ENCODE measurements at regions of chr15 and their contacts with region 1.

Region 1: DNA sequence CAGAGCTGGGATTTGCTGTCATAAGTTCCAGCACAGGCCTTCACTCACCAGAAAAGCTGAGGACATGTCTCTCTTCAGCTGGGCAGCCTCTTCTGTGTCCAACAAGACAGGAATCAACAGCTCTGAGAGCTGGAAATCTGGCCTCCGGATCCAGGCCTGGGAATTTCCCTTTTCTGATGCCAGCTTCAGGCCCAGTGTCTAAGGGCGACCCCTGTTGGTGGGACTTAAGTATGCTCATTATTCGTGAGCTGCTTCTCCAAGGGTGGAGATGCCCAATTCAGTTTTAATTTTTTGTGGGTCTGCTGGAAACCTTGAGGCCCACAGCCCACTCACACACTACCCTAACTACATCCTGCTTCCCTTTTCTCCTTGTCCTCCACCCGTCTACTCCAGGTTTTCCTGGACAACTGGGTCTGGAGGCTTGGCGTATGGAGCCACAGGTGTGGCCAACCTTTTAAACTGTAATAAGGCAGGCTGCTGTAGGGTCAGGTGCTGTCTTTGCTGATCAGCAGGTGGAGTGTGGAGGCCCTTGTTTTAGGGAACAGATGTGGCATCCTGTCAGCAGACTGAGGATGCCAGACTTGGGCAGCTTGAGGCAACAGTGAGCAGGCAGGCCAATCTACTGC is 2.6 kb upstream of the CEMIP start:
- DNase-seq: peak; percentile 70
- ATAC-seq: peak; percentile 76
- H3K4me3 ChIP-seq: no peak overlapping the region
- H3K27ac ChIP-seq: peak overlapping the region; percentile 49
- H3K4me1 ChIP-seq: peaks cover 35% of the 10 kb centered on the region
- H3K27me3 ChIP-seq: peaks cover 30% of the 10 kb centered on the region
- CTCF ChIP-seq: peak; percentile 83

Region 2: DNA sequence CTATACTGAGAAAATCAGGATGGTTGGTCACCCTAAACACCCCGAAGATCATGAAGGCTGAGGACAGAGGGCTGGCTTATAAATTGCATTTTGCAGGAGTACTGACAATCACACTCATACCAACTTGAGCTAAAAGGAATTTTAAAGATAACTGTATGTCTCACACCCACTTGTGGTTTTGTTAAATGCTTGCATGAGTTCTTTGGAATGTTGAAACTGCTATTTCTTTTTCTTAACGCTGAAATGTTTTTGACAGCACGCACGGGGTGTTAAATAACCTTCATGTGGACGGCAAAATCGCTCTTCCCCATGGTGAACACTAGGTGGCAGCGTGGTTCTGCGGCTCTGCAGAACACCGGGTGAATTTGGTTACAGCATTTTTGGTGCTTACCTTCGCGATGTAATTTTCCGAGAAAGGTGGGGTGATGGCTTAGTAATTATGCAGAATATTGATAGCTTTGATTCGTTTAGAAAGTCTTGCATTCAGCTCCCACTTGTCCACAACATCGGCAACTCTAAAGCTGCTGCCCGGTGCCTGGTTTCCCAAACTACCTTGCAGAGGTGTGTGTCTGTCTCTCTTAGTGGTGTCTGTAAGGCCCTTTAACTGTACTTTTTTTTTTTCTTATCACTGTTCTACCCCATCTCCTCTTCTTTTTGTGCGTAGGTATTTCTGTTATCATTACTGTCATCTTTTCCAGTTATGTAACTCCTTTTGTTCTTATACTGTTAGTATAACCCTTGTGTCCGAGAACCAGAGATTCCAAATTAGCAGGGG is 320.7 kb before region 1 on chr15:
- intact Hi-C with region 1: loop called (anchors 5 kb)
- DNase-seq: no peak
- ATAC-seq: peak; percentile 91
- H3K4me3 ChIP-seq: no peak overlapping the region
- H3K27ac ChIP-seq: no peak overlapping the region
- H3K4me1 ChIP-seq: peaks cover 29% of the 10 kb centered on the region
- H3K27me3 ChIP-seq: no peaks in the 10 kb centered on the region
- CTCF ChIP-seq: peak; percentile 95

Region 3: DNA sequence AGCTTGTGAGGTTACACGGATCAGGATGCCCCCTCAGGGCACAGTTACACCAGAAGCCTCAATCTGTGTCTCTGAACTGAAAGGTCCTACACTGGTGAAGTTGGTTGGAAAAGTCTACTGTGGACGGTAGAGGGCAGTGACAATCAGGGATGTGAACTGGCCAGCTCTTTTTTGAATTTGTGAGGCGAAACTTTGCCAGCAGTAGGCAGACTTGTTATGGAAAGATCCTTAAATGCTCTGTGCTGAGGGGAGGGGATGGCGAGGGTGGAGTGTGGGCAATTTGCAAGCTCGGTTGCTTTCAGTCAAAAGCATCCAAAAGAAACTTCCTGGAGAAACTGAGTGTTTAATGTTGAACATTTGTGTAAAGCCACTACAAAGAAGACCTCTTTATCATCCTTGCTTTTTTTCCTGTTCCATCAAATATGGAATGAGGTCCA is 208.8 kb before region 1 on chr15:
- intact Hi-C with region 1: loop called (anchors 5 kb)
- DNase-seq: peak; percentile 35
- ATAC-seq: peak; percentile 81
- H3K4me3 ChIP-seq: no peak overlapping the region
- H3K27ac ChIP-seq: no peak overlapping the region
- H3K4me1 ChIP-seq: no peaks in the 10 kb centered on the region
- H3K27me3 ChIP-seq: no peaks in the 10 kb centered on the region
- CTCF ChIP-seq: peak; percentile 77

Region 4: GRCh38 chr15:80856809-80857377 is 80.4 kb after region 1 on chr15:
- intact Hi-C with region 1: no loop called
- DNase-seq: peak; percentile 79
- ATAC-seq: peak; percentile 80
- H3K4me3 ChIP-seq: no peak overlapping the region
- H3K27ac ChIP-seq: peak overlapping the region; percentile 61
- H3K4me1 ChIP-seq: peaks cover 33% of the 10 kb centered on the region
- H3K27me3 ChIP-seq: no peaks in the 10 kb centered on the region
- CTCF ChIP-seq: no peak

Measured in upper lobe of right lung (tissue), 1 donor.